ENCODE measurements at regions of chr19 and their contacts with region 1.

Region 1: DNA sequence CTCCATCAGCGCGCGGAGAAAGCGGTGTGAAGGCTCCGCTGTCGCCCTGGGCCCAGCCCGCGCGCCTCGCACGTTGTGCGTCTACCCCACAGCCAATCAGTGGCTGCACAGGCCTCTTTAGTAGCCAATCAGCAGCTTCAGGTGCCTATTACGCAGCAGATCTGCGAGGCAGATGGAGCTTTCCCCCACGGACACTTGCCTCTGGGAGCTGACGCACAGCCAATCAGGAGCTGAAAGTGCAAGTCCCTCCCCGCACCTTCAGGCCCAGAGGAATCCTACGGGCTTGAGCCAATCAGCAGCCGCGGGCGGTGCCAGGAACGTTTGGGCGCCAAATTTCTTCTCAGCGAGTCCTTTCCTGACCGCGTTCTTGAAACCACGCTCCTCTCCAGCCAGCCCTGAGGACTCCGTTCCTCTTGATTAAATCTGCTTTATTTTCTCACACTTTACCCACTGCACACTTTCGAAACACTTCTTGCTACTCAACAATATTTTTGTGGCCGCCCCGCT is 39.9 kb downstream of the SIGLEC7 start:
- DNase-seq: no peak
- H3K4me3 ChIP-seq: no peak overlapping the region
- H3K27ac ChIP-seq: no peak overlapping the region
- H3K4me1 ChIP-seq: no peaks in the 10 kb centered on the region
- H3K27me3 ChIP-seq: no peaks in the 10 kb centered on the region
- CTCF ChIP-seq: no peak
- POLR2A ChIP-seq: no peak

Region 2: DNA sequence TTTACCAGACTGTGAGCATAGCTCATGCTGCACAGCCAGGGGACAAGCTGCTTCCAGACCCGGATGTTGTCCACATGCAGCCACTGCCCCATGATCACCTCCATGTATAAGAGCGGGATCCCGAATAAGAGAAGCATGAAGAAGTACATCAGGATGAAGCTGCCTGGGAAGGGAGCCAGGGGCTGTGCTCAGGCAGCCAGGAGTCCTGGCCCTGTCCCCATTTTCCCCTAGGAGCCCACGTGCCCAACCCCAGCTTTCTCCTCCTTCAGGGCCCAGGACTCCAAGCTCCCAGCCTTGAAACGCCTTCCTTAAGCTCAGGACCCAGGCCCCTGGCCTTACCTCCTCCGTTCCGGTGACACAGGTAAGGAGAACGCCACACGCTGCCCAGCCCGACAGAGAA is 1926.3 kb before region 1 on chr19:
- CTCF ChIA-PET with region 1: no interaction called
- POLR2A ChIA-PET with region 1: no interaction called
- dilution Hi-C with region 1: no loop called
- intact Hi-C with region 1: loop called (anchors 10 kb)
- DNase-seq: no peak
- H3K4me3 ChIP-seq: no peak overlapping the region
- H3K27ac ChIP-seq: no peak overlapping the region
- H3K4me1 ChIP-seq: no peaks in the 10 kb centered on the region
- H3K27me3 ChIP-seq: no peaks in the 10 kb centered on the region
- CTCF ChIP-seq: no peak
- POLR2A ChIP-seq: no peak

Region 3: DNA sequence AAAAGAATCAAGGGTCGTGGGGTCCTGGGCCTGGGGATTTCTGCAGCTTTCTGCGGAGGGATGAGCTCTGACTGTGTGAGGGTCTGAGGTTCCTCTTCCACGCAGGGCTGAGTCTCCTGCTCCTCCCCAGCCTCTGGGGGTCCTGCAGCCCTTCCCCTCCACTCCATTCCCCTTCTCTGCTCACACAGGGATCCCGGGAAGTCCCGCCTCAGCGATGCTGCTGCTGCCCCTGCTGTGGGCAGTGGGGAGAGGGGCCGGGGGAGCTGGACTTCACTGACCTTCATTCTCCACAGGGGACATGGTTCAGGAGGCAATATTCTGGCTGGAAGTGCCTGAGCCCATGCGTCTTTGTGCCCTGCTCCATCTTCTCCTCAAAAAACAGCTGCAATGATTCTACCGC is 16.7 kb after region 1 on chr19:
- CTCF ChIA-PET with region 1: no interaction called
- POLR2A ChIA-PET with region 1: no interaction called
- dilution Hi-C with region 1: no loop called
- intact Hi-C with region 1: loop called (anchors 1 kb)
- DNase-seq: no peak
- H3K4me3 ChIP-seq: no peak overlapping the region
- H3K27ac ChIP-seq: no peak overlapping the region
- H3K4me1 ChIP-seq: no peaks in the 10 kb centered on the region
- H3K27me3 ChIP-seq: no peaks in the 10 kb centered on the region
- CTCF ChIP-seq: no peak
- POLR2A ChIP-seq: no peak

Region 4: GRCh38 chr19:51242881-51243630 is 61.1 kb after region 1 on chr19:
- CTCF ChIA-PET with region 1: no interaction called
- POLR2A ChIA-PET with region 1: no interaction called
- dilution Hi-C with region 1: no loop called
- intact Hi-C with region 1: no loop called
- DNase-seq: no peak
- H3K4me3 ChIP-seq: no peak overlapping the region
- H3K27ac ChIP-seq: no peak overlapping the region
- H3K4me1 ChIP-seq: no peaks in the 10 kb centered on the region
- H3K27me3 ChIP-seq: no peaks in the 10 kb centered on the region
- CTCF ChIP-seq: no peak
- POLR2A ChIP-seq: no peak